Activated T-helper 2 cell treated with anti-CD3 and anti-CD28 coated beads, Interferon-gamma antibody, Interleukin-2, Interleukin-4, amounts not matched to agents 10 μg/mL and 5 μg/mL and 100 μg/mL, durations not matched to agents 14 hours and 24 hours and 36 hours (primary cell): ENCODE measurements at regions of chr11 and their contacts with region 1.

Region 1: GRCh38 chr11:108713076-108713790 is 48.4 kb downstream of the DDX10 start:
- DNase-seq: no peak
- H3K4me3 Mint-ChIP-seq: no peak overlapping the region
- H3K27ac Mint-ChIP-seq: peak overlapping the region; percentile 67
- H3K4me1 Mint-ChIP-seq: peaks cover 26% of the 10 kb centered on the region
- H3K27me3 Mint-ChIP-seq: no peaks in the 10 kb centered on the region

Region 2: DNA sequence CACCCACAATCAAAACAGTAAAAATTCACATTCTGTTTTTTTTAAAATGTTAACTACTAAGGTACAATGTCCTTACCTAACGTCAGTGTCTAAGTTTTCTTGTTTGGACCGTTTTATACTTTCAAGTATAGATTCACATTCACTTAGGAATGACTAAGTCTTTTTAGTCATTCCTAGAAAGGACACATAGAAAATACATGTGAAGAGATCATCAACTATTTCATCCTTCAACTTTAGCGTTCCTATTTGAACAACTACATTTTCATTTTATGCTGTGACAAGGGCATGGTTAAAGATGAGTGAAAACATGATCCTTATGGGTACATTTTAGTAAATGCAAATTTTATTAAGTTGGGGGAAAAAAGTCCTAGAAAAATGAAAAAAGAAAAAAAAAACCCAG is 14.4 kb after region 1 on chr11:
- intact Hi-C with region 1: loop called (anchors 1 kb)
- DNase-seq: no peak
- H3K4me3 Mint-ChIP-seq: no peak overlapping the region
- H3K27ac Mint-ChIP-seq: peak overlapping the region; percentile 67
- H3K4me1 Mint-ChIP-seq: peaks cover 45% of the 10 kb centered on the region
- H3K27me3 Mint-ChIP-seq: no peaks in the 10 kb centered on the region